ENCODE measurements at regions of chr2 and their contacts with region 1.

Region 1: GRCh38 chr2:111975053-111975552 is 76.7 kb downstream of the MERTK start:
- DNase-seq: peak; percentile 69 to 84
- ATAC-seq: peak; percentile 52
- H3K4me3 ChIP-seq: no peak overlapping the region
- H3K27ac ChIP-seq: peak overlapping the region in 1 of 2 donors; percentile 52
- H3K4me1 ChIP-seq: peaks cover 2 to 16% of the 10 kb centered on the region in 2 donors
- H3K27me3 ChIP-seq: no peaks in the 10 kb centered on the region

Region 2: GRCh38 chr2:111919794-111920608 is 55.1 kb before region 1 on chr2:
- intact Hi-C with region 1: no loop called
- DNase-seq: peak in 1 of 2 donors; percentile 85
- ATAC-seq: peak; percentile 47
- H3K4me3 ChIP-seq: no peak overlapping the region
- H3K27ac ChIP-seq: no peak overlapping the region
- H3K4me1 ChIP-seq: no peaks in the 10 kb centered on the region
- H3K27me3 ChIP-seq: no peaks in the 10 kb centered on the region

Region 3: GRCh38 chr2:111946294-111947114 is 28.6 kb before region 1 on chr2:
- intact Hi-C with region 1: loop called in 1 of 2 experiments (anchors 1 kb)
- DNase-seq: no peak
- ATAC-seq: peak; percentile 84
- H3K4me3 ChIP-seq: no peak overlapping the region
- H3K27ac ChIP-seq: peak overlapping the region; percentile 29 to 67
- H3K4me1 ChIP-seq: peaks cover 0 to 3% of the 10 kb centered on the region in 2 donors
- H3K27me3 ChIP-seq: no peaks in the 10 kb centered on the region

Region 4: GRCh38 chr2:112054847-112055729 is 80.0 kb after region 1 on chr2 and contains the start of gene TMEM87B:
- intact Hi-C with region 1: loop called in 1 of 2 experiments (anchors 5 kb)
- DNase-seq: peak; percentile 99 to 100
- ATAC-seq: peak; percentile 94
- H3K4me3 ChIP-seq: peak within 1 kb of the TSS; percentile 64 to 78
- H3K27ac ChIP-seq: peak within 1 kb of the TSS; percentile 28 to 93
- H3K4me1 ChIP-seq: no peaks in the 10 kb centered on the region
- H3K27me3 ChIP-seq: no peaks in the 10 kb centered on the region
- total RNA-seq, gene TMEM87B: 28.3 to 31.5 TPM

Measured in aorta (tissue), 5 donors.